Activated naive CD8-positive, alpha-beta T cell treated with anti-CD3 and anti-CD28 coated beads, Interleukin-2, amount 10 ng/mL, durations not matched to agents 7 days and 5 days (primary cell): ENCODE measurements at regions of chr1 and their contacts with region 1.

Region 1: DNA sequence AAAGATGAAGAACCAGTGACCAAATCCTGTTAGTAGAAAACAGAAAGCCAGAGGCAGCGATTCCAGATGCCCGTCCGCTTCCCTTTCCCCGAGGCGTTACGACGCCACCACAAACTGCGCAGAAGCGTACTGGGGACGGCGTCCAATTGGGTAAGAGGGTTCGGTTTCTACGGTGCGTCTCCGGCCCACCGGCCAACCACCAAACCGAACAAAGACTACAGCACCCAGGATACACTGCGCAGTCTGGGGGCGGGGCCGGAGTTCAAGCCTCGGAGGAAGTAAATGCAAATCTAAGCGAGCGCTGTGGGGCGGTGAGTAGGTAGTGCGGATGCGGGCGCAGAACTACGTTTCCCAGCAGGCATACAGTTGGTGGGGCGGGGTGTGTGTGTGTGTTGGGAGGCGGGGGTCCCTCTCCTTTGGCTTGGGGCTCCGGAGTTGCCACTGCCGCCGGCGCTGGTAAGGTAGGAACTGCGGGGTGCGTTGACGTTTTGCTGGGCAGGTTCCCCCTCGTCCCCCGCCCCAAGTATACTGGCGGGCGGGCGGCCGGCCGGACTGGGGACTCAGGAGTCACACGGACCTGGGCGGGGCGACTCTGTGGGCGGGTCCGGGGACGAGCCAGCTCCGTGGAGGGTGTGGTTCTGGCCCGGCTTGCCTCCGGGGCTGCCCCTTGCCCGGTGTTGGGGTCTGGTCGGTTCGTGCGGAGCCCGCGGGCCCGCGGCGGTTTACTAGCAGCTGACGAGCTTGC is at the starts of genes SWT1 and TRMT1L:
- DNase-seq: peak; percentile 97
- ATAC-seq: peak; percentile 95
- H3K4me3 Mint-ChIP-seq: peak within 1 kb of the TSS; percentile 99
- H3K27ac Mint-ChIP-seq: peak within 1 kb of the TSS; percentile 100
- H3K4me1 Mint-ChIP-seq: peaks cover 43% of the 10 kb centered on the region
- H3K27me3 Mint-ChIP-seq: no peaks in the 10 kb centered on the region
- total RNA-seq, gene SWT1: 3.9 to 5.6 TPM
- total RNA-seq, gene TRMT1L: 22.0 to 22.9 TPM

Region 2: DNA sequence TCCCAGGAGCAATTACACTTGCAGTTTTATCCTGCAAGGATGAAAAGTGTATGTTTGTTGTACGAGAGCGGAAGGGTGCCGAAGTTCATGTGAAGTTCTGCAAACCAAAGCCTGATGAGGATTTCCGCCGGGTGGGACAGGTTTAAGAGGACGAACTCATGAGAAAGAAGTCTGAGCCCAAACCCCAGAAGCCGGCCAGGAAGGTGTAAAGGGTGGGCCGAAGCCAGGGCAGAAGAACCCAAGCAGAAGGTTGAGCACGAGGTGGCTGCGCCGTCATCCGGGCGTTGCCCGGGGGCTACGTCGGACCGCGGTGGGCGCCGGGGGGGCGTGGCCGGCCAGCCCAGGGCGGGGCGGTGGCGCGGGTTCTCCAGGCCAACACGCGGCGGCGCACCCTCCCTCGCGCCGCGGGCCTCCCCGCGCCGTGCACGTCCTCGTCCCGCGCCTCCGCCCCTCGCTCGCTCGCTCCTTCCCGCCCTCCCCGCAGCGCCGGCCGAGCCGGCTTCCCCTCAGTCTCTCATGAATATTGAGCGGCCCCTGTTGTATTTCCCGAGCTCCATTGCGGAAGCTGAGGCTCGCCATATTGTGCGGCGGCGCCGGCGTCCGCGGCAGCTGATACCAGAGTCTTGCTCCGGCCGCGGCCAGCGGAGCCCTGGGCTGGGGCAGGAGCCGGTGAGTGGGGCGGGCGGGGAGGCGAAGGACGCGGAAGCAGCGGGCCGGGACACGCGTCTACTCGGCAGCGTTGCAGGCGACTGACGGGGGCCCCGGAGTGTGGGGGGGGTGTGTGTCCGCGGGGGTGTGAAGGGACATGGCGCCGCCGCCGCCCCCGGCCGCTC is 111.8 kb before region 1 on chr1 and contains the start of gene RNF2:
- POLR2A ChIA-PET with region 1: interaction called, 22 read pairs
- DNase-seq: peak; percentile 88
- ATAC-seq: peak; percentile 89
- H3K4me3 Mint-ChIP-seq: peak within 1 kb of the TSS; percentile 89
- H3K27ac Mint-ChIP-seq: peak within 1 kb of the TSS; percentile 89
- H3K4me1 Mint-ChIP-seq: peaks cover 25% of the 10 kb centered on the region
- H3K27me3 Mint-ChIP-seq: no peaks in the 10 kb centered on the region
- total RNA-seq, gene RNF2: 21.3 to 23.7 TPM

Region 3: GRCh38 chr1:185144233-185144632 is 12.8 kb before region 1 on chr1:
- POLR2A ChIA-PET with region 1: no interaction called
- DNase-seq: no peak
- ATAC-seq: no peak
- H3K4me3 Mint-ChIP-seq: no peak overlapping the region
- H3K27ac Mint-ChIP-seq: no peak overlapping the region
- H3K4me1 Mint-ChIP-seq: peaks cover 2% of the 10 kb centered on the region
- H3K27me3 Mint-ChIP-seq: no peaks in the 10 kb centered on the region

Region 4: GRCh38 chr1:185170291-185170848 is 13.3 kb after region 1 on chr1:
- POLR2A ChIA-PET with region 1: interaction called, 19 read pairs
- DNase-seq: peak; percentile 58
- ATAC-seq: peak; percentile 96
- H3K4me3 Mint-ChIP-seq: peak overlapping the region; percentile 20
- H3K27ac Mint-ChIP-seq: no peak overlapping the region
- H3K4me1 Mint-ChIP-seq: peaks cover 16% of the 10 kb centered on the region
- H3K27me3 Mint-ChIP-seq: no peaks in the 10 kb centered on the region